Natural killer cell (primary cell): ENCODE measurements at regions of chr2 and their contacts with region 1.

Region 1: DNA sequence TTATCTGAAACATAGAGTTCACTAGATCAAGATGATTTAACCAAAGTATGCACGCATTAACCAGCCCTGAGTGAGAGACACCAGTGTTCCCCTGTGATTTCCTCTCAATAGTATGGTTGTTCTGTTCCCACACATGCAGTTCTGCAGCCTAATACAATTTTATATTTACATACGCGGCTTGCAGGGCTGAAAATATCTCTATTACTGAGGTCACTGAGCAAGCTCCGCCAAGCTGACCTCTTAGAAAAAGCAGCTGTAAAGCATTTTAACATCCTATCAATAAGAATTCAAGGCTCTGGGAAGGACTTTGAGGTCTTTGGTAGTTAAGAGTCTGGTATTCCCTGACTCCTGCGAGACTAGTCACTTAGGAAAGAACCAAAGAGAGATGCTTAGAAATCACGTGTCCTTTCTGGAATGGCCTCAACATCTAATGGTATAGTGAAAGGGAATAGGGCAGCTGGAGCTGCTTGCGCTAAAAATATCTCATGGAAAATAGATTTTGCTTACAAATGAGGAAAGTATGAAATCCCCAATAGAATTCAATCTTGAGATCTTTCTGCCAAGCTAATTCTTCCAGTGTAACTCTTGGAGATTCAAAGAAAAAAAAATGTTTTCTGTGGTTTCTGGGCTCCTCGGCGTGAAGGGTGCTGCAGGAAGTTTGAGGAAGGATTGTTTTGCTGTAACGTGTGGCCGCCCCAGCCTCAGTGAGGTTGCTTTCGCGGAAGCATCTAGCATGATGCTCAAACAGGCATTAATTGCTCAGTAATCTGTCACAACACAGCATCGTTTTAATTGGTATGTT is 59.2 kb downstream of the DOCK10 start:
- DNase-seq: peak in 1 of 2 donors; percentile 71
- ATAC-seq: peak; percentile 51 to 74 (median 68)
- H3K4me3 ChIP-seq: no peak overlapping the region
- H3K4me3 Mint-ChIP-seq: peak overlapping the region; percentile 87
- H3K27ac ChIP-seq: peak overlapping the region; percentile 69
- H3K27ac Mint-ChIP-seq: peak overlapping the region; percentile 85 to 93
- H3K4me1 ChIP-seq: peaks cover 54% of the 10 kb centered on the region
- H3K4me1 Mint-ChIP-seq: peaks cover 76 to 79% of the 10 kb centered on the region in 2 donors
- H3K27me3 ChIP-seq: no peaks in the 10 kb centered on the region
- H3K27me3 Mint-ChIP-seq: no peaks in the 10 kb centered on the region
- CTCF ChIP-seq: no peak

Region 2: DNA sequence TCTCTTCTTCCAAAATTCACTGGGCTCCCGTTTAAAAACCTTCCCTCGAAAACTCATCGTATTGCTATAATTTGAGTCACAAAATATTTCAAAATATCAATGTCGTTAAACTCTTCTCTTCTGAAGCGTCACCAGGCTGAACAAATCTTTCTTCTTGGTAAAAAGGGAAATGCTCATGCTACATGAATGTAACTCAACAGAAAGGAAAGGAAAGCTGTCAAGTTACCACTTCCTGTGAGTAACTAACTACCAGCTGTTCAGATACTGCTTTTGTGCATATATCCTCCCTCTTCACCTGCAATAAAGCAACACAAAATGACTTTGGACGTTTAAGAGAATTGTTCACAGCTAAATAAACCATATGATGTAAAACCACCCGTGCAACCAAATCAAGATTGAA is 36.2 kb before region 1 on chr2:
- intact Hi-C with region 1: loop called (anchors 2 kb)
- DNase-seq: peak in 1 of 2 donors; percentile 79
- ATAC-seq: peak; percentile 86 to 92 (median 90)
- H3K4me3 ChIP-seq: peak overlapping the region; percentile 61
- H3K4me3 Mint-ChIP-seq: peak overlapping the region; percentile 96
- H3K27ac ChIP-seq: peak overlapping the region; percentile 87
- H3K27ac Mint-ChIP-seq: peak overlapping the region; percentile 85 to 87
- H3K4me1 ChIP-seq: peaks cover 35% of the 10 kb centered on the region
- H3K4me1 Mint-ChIP-seq: peaks cover 81 to 89% of the 10 kb centered on the region in 2 donors
- H3K27me3 ChIP-seq: no peaks in the 10 kb centered on the region
- H3K27me3 Mint-ChIP-seq: no peaks in the 10 kb centered on the region
- CTCF ChIP-seq: no peak